Dorsolateral prefrontal cortex (tissue), 120 donors: ENCODE measurements at regions of chr3 and their contacts with region 1.

Region 1: GRCh38 chr3:129249276-129250065 is at the start of gene COPG1:
- DNase-seq: peak; percentile 69 to 93 (median 84)
- H3K4me3 ChIP-seq: peak within 1 kb of the TSS; percentile 68 to 100 (median 98)
- H3K27ac ChIP-seq: peak within 1 kb of the TSS; percentile 5 to 96 (median 83)
- H3K27me3 ChIP-seq: no peaks in the 10 kb centered on the region
- CTCF ChIP-seq: peak in 28 of 56 donors; percentile 3 to 57 (median 30)
- total RNA-seq, gene COPG1: 64.7 to 179 (median 137) TPM

Region 2: GRCh38 chr3:128969993-128970739 is 279.3 kb before region 1 on chr3:
- intact Hi-C with region 1: loop called (anchors 2 to 10 kb)
- DNase-seq: peak in 4 of 10 donors; percentile 28 to 52 (median 32)
- H3K4me3 ChIP-seq: no peak overlapping the region
- H3K27ac ChIP-seq: no peak overlapping the region
- H3K27me3 ChIP-seq: no peaks in the 10 kb centered on the region
- CTCF ChIP-seq: peak; percentile 47 to 95 (median 87)

Region 3: DNA sequence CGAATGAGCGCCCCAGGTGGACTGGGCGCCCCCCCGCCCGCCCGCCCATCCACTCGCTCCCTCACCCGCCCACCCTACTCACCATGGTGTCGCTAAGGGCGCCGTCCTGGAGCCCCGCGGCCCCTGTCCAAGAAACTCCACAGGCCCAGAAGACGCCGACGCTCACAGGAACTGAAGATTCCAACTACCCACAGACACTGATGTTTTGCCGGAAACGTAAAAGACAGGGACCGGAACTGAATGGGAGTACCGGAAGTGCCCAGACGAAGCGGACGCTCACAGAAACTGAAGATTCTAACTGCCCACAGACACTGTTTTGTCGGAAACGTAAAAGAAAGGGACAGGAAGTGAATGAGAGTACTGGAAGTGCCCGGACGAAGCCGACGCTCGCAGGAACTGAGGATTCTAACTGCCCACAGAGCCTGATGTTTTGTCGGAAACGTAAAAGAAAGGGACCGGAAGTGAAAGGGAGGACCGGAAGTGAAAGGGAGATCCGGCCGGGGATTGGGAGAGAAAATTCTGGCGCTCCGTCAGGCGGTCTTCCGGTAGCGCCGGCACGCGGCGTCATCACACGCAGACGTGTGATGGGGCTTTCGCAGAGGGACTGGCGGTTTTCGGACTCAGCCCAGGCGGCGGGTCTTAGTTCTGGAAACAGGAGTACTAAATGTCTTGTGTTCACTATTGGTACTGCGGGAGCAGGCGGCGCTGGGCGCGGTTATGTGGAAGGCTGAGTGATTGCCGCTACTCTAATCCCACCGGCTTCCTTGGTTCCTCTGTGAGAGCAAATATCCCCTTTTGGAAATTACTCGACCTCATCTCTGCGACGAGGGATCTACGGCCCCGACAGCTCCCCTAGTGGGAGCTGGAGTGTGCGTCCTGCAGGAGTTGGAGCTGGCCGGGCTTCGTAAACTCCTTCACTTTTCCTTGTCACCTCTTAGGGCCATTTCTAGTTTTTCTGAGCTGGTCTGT is 88.3 kb before region 1 on chr3 and contains the start of gene ISY1:
- intact Hi-C with region 1: loop called in 1 of 2 experiments (anchors 1 kb)
- DNase-seq: peak; percentile 65 to 90 (median 88)
- H3K4me3 ChIP-seq: peak within 1 kb of the TSS; percentile 57 to 99 (median 90)
- H3K27ac ChIP-seq: peak within 1 kb of the TSS; percentile 76 to 99 (median 97)
- H3K27me3 ChIP-seq: no peaks in the 10 kb centered on the region
- CTCF ChIP-seq: peak in 52 of 56 donors; percentile 26 to 76 (median 54)
- total RNA-seq, gene ISY1: 9.5 to 31.1 (median 20.5) TPM

Region 4: DNA sequence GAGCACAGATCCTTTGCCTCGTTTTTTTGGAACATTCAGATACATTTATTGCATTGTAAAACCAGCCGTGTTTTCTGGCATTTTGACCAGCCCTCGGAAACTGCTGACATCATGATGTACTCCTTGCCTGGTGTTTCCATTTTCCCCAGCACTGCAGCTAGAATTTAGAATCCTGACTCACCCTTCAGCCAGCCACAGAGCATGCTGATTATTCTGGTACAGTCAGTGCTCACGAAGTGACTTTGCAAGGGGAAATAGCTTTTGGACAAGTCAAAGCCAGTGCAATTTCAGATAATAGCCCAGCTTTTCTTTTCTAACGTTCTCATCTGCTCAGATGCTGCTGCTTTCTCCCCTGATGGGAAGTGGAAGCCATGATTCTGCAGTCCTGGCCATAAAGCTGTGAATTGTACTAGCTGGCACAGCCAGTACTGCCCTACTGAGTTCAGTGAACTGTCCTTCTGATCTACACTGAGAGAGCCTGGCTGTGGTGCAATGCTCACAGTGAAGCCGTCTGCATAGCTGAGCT is 53.7 kb before region 1 on chr3:
- intact Hi-C with region 1: loop called in 1 of 2 experiments (anchors 5 kb)
- DNase-seq: peak in 8 of 10 donors; percentile 47 to 75 (median 57)
- H3K4me3 ChIP-seq: peak overlapping the region in 42 of 59 donors; percentile 2 to 54 (median 25)
- H3K27ac ChIP-seq: peak overlapping the region; percentile 60 to 97 (median 91)
- H3K27me3 ChIP-seq: no peaks in the 10 kb centered on the region
- CTCF ChIP-seq: peak in 4 of 56 donors; percentile 9 to 28 (median 14)

Region 5: GRCh38 chr3:129316131-129317013 is 66.9 kb after region 1 on chr3:
- intact Hi-C with region 1: loop called in 1 of 2 experiments (anchors 2 kb)
- DNase-seq: peak; percentile 85 to 93 (median 90)
- H3K4me3 ChIP-seq: peak overlapping the region; percentile 64 to 99 (median 92)
- H3K27ac ChIP-seq: peak overlapping the region; percentile 51 to 99 (median 96)
- H3K27me3 ChIP-seq: no peaks in the 10 kb centered on the region
- CTCF ChIP-seq: peak; percentile 12 to 82 (median 58)

Region 6: DNA sequence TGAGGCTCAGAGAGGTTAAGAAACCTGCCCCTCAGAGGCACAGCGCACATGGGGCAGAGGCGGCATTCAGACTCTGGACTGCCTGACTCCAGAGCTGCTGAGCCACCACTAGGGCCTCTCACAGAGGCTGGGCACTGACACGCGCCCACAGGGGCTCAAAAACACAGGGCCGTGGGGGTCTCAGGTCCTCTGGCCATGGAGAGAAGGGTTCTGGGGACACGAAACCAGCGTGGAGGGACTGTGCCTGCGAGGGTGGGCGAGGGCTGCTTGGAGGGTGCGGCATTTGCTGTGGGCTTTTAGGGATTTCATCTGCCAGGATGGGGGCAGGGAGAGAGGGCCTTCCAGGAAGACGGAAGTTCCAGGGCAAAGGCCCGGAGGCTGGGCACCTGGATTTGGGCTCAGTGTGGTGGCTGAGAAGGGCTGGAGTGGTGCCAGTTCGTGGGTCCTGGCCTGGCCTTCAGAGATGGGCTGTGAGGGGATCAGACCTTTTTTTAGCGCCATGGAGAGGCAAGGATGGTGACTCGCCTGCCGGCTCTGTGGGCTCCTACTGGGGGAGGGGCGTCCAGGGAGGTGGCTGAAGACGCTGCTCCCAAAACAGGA is 109.4 kb after region 1 on chr3:
- intact Hi-C with region 1: no loop called
- DNase-seq: no peak
- H3K4me3 ChIP-seq: no peak overlapping the region
- H3K27ac ChIP-seq: no peak overlapping the region
- H3K27me3 ChIP-seq: no peaks in the 10 kb centered on the region
- CTCF ChIP-seq: no peak